SK-N-SH (cell line): ENCODE measurements at regions of chr4 and their contacts with region 1.

Region 1: GRCh38 chr4:54228056-54228527 is 1.0 kb upstream of the PDGFRA start:
- DNase-seq: peak; percentile 87
- H3K4me3 ChIP-seq: peak overlapping the region; percentile 64 to 85
- H3K27ac ChIP-seq: peak overlapping the region; percentile 79 to 90; a peak in 3 of 4 replicates
- H3K4me1 ChIP-seq: peaks cover 0 to 20% of the 10 kb centered on the region in 2 experiments; a peak in 2 of 4 replicates
- H3K27me3 ChIP-seq: no peaks in the 10 kb centered on the region
- CTCF ChIP-seq: peak; percentile 88
- EP300 ChIP-seq: no peak
- RAD21 ChIP-seq: peak; percentile 91

Region 2: DNA sequence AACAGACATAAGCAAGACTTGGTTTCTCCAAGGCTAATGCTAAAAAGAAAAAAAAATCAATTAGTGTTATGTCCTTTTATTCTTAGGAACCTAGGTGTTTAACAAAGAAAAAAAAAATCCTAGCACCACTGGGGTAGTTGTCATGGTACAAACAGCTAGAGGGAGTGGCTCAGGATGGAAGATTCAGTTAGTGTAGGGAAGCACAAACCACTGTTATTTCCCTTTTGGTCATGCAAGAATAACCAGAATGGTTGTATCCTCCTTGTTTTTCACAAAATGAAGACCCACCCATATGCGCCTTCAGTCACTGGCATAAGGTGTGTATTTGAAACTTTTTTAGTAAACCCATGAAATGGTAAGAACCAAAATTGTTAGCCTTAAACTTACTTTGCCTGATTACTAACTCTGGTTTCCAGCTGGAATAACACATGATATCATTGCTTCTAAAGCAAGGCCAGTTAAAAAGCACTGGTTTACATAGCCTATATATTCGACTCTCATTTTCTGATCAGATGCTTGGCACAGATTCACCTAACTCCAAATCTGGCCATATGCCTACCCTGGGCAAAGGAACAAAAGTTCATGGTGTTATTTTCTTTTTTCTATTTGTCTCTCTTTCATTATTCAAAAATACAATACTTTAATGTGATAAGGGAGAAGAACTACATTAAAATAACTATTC is 994.8 kb before region 1 on chr4:
- CTCF ChIA-PET with region 1: no interaction called
- POLR2A ChIA-PET with region 1: no interaction called
- DNase-seq: no peak
- H3K4me3 ChIP-seq: no peak overlapping the region
- H3K27ac ChIP-seq: no peak overlapping the region
- H3K4me1 ChIP-seq: no peaks in the 10 kb centered on the region; a peak in 1 of 4 replicates
- H3K27me3 ChIP-seq: no peaks in the 10 kb centered on the region
- CTCF ChIP-seq: no peak
- EP300 ChIP-seq: no peak
- RAD21 ChIP-seq: no peak

Region 3: DNA sequence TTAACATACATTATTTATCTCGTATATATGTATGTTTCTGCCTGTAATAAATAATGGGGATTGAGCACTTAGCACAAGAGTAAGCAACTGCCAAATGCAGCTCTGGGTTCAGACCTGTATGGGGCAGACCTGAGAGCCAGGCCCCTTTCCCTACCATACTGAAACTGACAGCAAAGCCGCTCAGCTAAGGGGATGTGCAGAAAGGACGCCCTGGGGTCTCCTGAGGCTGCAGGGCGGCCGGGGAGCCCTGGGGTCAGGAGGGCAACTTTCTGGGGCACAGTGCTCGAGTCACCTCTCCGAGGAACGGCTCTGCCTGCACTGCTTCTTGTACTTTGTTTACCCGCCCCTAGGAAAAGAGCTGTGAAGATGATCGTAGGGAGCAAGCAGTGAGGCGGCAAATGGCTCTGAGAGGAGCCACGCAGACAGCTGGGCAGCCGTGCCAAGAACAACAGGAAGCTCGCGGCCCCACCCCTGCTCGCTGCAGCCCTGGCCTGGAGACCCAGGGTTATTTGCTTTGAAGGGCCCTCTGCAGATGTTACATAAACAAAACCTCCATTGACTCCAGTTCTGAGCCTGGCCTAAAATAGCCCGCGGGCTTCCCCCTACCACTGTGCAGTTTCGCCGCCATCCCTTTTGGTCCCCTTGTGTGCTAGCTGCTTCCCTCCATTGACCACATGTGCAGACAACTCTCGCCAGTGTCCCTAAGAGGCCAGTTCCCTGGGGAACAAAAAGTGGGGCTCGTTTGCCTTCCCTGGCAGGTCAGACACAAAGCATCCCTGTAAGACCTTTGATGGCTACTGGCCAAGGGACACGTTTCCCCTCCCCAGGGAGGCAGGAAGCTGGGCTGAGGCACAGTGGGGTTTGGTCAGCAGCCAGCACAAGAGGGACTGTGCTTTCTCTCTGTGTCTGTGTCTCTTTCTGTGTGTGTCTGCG is 525.5 kb before region 1 on chr4:
- CTCF ChIA-PET with region 1: interaction called, 26 read pairs
- POLR2A ChIA-PET with region 1: interaction called, 5 read pairs
- DNase-seq: peak; percentile 84
- H3K4me3 ChIP-seq: peak overlapping the region; percentile 4 to 22; a peak in 2 of 4 replicates
- H3K27ac ChIP-seq: peak overlapping the region; percentile 81 to 99
- H3K4me1 ChIP-seq: peaks cover 24 to 40% of the 10 kb centered on the region in 2 experiments
- H3K27me3 ChIP-seq: no peaks in the 10 kb centered on the region
- CTCF ChIP-seq: peak; percentile 20; the same call in 1 of the 2 replicates
- EP300 ChIP-seq: peak; percentile 22 to 38; a peak in 2 of 4 replicates
- RAD21 ChIP-seq: peak; percentile 20

Region 4: DNA sequence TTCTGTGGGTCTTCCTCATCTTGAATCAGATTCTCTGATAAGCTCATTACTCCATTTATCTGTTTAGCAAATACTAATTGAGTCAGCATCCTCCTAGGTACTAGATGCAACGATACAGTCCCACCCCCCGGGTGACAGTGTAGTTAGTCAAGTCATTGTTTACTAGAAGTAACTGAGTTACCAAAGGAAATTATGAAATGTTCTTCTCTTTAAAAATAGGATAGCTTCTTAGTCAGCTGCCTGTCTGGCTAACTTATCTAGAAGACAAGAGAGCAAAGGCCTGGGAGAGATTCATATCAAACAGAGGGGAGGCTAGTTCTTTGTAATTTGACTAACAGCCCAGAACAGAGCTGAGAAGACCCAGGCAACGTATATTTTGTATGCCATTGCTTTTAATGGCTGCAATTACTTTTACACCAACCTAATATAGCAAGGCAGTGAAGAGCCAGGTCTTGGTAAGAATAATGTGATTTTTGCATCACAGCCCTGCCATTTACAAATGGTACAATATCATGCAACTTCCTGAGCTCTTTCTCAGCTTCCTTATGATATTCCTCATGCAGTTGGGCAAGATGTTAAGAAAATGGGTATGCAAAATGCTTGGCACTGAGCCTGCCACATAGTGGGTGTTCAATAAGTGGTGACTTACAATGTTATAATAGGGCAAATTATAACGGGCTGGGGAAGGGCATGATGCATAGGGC is 313.6 kb before region 1 on chr4:
- CTCF ChIA-PET with region 1: interaction called, 152 read pairs
- POLR2A ChIA-PET with region 1: no interaction called
- DNase-seq: no peak
- H3K4me3 ChIP-seq: no peak overlapping the region
- H3K27ac ChIP-seq: peak overlapping the region in 1 of 2 experiments; percentile 77; a peak in 2 of 4 replicates
- H3K4me1 ChIP-seq: peaks cover 3 to 7% of the 10 kb centered on the region in 2 experiments
- H3K27me3 ChIP-seq: no peaks in the 10 kb centered on the region
- CTCF ChIP-seq: no peak
- EP300 ChIP-seq: peak in 1 of 2 experiments; percentile 64; a peak in 1 of 4 replicates
- RAD21 ChIP-seq: no peak

Region 5: DNA sequence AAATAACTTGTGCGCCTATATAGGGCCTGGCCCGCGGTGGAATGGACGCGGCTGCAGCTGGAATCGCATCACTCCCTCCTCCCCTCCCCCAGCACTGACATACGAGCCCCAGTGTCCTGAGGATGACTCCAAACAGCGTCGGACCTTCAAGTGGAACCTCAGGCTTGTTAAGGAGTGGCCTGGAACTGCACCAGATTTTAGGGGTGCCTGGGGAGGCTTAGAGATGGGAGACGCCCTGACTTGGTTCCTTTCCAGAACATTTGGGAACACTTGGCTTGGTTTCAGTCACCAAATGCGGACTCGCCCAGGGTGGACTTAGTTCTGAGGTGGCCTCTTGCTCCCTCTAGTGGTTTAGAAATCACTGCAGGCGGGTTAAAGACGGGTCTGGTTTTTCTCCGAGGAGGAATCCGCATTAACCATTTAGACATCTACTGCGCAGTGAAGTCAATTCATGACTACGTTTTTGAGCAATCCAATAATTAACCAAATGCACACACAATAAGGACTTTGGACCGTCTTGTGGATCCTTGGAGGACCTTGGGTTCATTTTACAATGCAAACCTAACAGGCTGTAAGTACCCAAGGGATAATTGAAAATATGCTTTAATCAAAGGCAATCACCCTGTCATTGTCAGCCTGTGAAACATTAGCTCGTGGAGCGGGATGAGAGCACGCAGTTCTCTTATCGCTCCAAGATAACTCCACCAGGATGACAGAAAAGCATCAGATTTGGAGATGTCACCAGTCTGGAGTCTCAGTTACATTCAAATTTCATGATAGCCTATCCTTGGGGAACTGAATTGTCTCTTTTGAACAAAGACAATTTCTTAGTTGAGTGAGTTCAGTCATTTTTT is 10.2 kb before region 1 on chr4:
- CTCF ChIA-PET with region 1: interaction called, 97 read pairs
- POLR2A ChIA-PET with region 1: no interaction called
- DNase-seq: peak; percentile 81
- H3K4me3 ChIP-seq: peak overlapping the region; percentile 45 to 54
- H3K27ac ChIP-seq: peak overlapping the region in 1 of 2 experiments; percentile 71; a peak in 1 of 4 replicates
- H3K4me1 ChIP-seq: peaks cover 0 to 7% of the 10 kb centered on the region in 2 experiments; a peak in 3 of 4 replicates
- H3K27me3 ChIP-seq: no peaks in the 10 kb centered on the region
- CTCF ChIP-seq: peak; percentile 96
- EP300 ChIP-seq: peak; percentile 24 to 56; a peak in 2 of 4 replicates
- RAD21 ChIP-seq: peak; percentile 94